ENCODE measurements at regions of chr17 and their contacts with region 1.

Region 1: DNA sequence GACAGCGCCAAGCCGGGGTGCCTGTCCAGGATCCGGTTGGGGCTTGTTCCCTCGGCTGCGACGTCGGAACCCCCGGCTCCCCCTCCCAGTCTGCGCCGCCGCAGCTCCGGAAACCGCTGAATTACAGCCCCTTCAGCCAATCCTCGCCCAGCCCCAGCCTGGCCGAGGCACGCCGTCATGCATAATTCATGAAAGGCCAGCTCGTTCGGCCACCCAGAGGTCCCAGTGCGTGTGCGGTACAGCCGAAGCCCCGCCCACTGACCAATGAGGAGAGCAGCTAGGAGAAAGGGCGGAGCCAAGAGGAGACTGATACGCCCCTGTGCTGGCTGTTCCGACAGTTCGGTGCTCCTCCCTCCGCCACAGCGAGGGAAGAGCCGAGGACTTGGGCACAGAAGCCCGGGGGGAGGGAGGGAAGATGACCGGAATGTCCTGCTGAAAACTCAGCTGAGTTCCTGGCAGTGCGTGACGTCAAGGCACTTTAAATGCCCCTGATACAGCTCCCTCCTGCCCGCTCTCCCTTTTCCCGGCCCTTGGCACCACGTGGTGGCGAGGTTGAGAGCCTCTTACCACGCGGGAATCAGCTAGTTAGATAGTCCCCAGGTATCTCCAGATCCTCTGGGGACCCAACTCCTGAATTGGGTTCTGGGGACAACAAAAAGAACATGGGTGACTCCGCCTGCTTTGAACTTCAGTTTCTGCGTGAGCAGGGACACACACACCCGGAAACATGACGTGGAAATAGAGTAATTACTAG is at the start of gene STAT3:
- DNase-seq: peak; percentile 100
- H3K4me3 ChIP-seq: peak within 1 kb of the TSS; percentile 92 to 98
- H3K27ac ChIP-seq: peak within 1 kb of the TSS; percentile 100
- H3K4me1 ChIP-seq: peaks cover 0 to 21% of the 10 kb centered on the region in 2 donors
- H3K27me3 ChIP-seq: no peaks in the 10 kb centered on the region
- CTCF ChIP-seq: peak in 1 of 3 experiments; percentile 14
- total RNA-seq, gene STAT3: 181 TPM

Region 2: DNA sequence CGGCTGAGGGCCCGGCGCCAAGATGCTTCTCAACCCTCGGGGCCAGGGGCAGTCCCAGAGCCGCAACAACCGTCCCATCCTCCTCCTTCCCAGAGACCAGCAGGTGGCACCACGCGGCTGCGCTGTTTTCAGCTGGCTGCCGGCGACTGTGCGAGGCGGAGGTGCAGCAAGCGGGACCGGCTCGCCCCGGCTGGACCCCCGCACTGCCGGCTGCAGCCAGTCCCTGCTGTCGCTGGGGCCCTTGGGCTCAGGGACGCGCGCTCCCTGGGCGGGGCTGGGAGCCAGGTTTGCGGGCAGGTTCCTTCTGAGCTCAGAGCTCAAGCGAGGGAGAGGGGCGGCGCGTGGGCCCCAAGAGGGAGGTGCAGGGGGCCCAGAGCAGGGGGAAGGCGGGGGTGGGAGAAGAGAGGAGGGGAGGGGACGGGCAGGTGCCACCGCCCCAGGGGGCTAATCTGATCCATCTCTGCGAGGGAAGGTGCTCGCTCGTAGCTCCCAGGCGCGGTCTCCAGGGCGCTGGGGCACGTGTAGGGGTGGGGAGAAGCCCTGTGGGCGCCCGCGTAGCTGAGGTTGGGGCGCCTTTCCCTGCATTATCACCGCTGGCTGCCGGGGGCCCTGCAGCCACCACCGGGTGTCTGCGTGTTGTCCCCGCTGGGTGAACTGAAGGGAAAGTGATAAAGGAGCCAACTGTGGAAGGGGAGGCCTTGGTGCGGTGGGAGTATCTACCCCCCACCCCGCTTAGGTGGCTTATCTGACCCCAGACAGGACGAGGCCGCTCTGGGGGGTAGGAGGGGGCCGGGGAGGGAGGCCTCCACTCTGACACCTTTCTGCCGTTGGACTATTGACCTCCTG is 76.0 kb before region 1 on chr17:
- intact Hi-C with region 1: loop called (anchors 2 kb)
- DNase-seq: peak in 1 of 2 donors; percentile 90
- H3K4me3 ChIP-seq: peak overlapping the region; percentile 5 to 23
- H3K27ac ChIP-seq: peak overlapping the region; percentile 67 to 72
- H3K4me1 ChIP-seq: peaks cover 0 to 17% of the 10 kb centered on the region in 2 donors
- H3K27me3 ChIP-seq: no peaks in the 10 kb centered on the region
- CTCF ChIP-seq: peak; percentile 50 to 80 (median 71)

Region 3: GRCh38 chr17:42347198-42347597 is 41.4 kb before region 1 on chr17:
- intact Hi-C with region 1: loop called (anchors 2 kb)
- DNase-seq: peak in 1 of 2 donors; percentile 89
- H3K4me3 ChIP-seq: no peak overlapping the region
- H3K27ac ChIP-seq: peak overlapping the region; percentile 73 to 80
- H3K4me1 ChIP-seq: peaks cover 13 to 37% of the 10 kb centered on the region in 2 donors
- H3K27me3 ChIP-seq: no peaks in the 10 kb centered on the region
- CTCF ChIP-seq: no peak

Region 4: DNA sequence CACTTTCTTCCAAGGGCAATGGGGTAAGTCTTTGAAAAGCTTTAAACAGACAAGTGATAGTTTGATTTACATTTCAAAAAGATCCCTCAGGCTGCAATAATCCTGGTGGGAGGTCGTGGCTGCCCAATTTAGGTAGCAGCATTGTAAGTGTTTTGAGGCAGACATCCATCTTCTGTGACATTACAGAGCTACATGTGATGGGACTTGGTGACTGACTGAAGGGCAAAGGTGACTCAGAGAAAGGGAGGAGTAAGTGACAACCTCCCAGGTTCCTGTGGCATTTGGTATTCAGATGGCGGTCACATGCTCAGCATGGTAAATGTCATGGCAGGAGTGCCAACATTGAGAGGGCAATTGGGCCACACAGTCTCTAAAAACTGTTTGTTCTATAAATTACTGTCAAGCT is 26.8 kb before region 1 on chr17:
- intact Hi-C with region 1: loop called (anchors 2 kb)
- DNase-seq: peak in 1 of 2 donors; percentile 54
- H3K4me3 ChIP-seq: no peak overlapping the region
- H3K27ac ChIP-seq: peak overlapping the region; percentile 79 to 88
- H3K4me1 ChIP-seq: peaks cover 21 to 60% of the 10 kb centered on the region in 2 donors
- H3K27me3 ChIP-seq: no peaks in the 10 kb centered on the region
- CTCF ChIP-seq: no peak

Region 5: DNA sequence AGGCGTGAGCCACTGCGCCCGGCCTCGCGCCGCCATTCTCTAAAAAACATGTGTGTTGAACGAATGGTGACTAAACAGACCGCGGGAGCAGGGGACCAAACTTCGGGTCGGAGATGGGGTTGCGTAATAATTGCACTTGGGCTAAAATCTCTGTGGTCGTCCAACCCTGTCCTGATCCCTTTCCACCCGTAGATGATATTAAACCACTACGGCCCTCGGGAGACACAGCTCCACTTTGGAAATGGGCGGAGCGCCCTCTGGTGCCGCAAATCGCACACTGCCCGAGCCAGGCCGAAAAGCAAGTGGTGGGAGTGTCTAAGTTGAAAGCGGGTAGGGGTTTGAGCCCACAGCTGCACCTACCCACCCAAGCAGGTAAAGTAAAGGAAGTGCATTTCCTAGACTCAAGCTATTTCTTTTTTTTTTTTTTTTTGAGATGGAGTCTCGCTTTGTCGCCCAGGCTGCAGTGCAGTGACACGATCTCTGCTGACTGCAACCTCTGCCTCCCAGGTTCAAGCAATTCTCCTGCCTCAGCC is 17.5 kb after region 1 on chr17:
- intact Hi-C with region 1: loop called (anchors 2 kb)
- DNase-seq: peak in 1 of 2 donors; percentile 91
- H3K4me3 ChIP-seq: peak overlapping the region in 1 of 2 donors; percentile 2
- H3K27ac ChIP-seq: peak overlapping the region; percentile 76 to 84
- H3K4me1 ChIP-seq: peaks cover 33 to 59% of the 10 kb centered on the region in 2 donors
- H3K27me3 ChIP-seq: no peaks in the 10 kb centered on the region
- CTCF ChIP-seq: peak; percentile 84 to 90 (median 89)

Region 6: GRCh38 chr17:42436391-42436790 is 47.8 kb after region 1 on chr17:
- intact Hi-C with region 1: no loop called
- DNase-seq: peak in 1 of 2 donors; percentile 85
- H3K4me3 ChIP-seq: no peak overlapping the region
- H3K27ac ChIP-seq: peak overlapping the region; percentile 28 to 60
- H3K4me1 ChIP-seq: no peaks in the 10 kb centered on the region
- H3K27me3 ChIP-seq: no peaks in the 10 kb centered on the region
- CTCF ChIP-seq: no peak

Region 7: GRCh38 chr17:42493319-42493718 is 104.8 kb after region 1 on chr17:
- intact Hi-C with region 1: no loop called
- DNase-seq: no peak
- H3K4me3 ChIP-seq: no peak overlapping the region
- H3K27ac ChIP-seq: no peak overlapping the region
- H3K4me1 ChIP-seq: no peaks in the 10 kb centered on the region
- H3K27me3 ChIP-seq: no peaks in the 10 kb centered on the region
- CTCF ChIP-seq: no peak

Measured in ascending aorta (tissue), 2 donors.